ENCODE measurements at regions of chr1 and their contacts with region 1.

Region 1: GRCh38 chr1:62841587-62842169 is 57.7 kb downstream of the ATG4C start:
- DNase-seq: peak; percentile 53
- H3K4me3 ChIP-seq: no peak overlapping the region
- H3K27ac ChIP-seq: no peak overlapping the region
- H3K27me3 ChIP-seq: no peaks in the 10 kb centered on the region
- CTCF ChIP-seq: peak; percentile 67

Region 2: DNA sequence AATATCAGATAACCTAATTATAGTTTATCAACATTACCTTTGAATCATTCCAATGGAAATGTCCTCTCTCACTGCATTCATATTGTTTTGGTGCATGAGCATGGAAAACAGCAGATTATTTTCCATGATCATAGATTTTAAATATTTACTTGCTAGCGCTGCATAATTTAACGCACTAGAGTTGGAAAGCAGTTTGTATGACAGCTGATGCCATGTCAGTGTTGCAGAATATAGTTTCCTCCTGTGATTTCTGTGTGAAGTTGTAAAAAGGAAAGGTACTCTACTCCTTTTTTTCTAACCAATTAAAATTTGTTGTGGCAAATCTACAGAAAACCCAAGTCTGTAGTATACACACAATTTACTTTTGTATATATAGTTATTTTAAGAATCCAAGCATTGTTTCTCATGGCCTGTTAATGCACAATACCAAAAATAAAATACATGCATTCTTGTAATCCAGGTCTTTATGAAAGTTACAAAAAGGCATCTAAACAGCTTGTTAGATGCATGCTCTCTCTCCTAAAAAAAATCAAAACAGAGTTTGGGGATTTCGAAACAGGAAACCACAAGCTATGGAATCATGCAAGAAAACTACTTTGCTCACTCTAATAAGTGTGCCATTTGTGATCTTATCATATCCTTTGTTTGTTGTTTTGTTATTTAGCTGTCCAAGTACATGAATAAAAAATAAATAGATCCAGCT is 59.7 kb before region 1 on chr1:
- CTCF ChIA-PET with region 1: no interaction called
- POLR2A ChIA-PET with region 1: no interaction called
- DNase-seq: peak; percentile 3
- H3K4me3 ChIP-seq: no peak overlapping the region
- H3K27ac ChIP-seq: no peak overlapping the region
- H3K27me3 ChIP-seq: peaks cover 6% of the 10 kb centered on the region
- CTCF ChIP-seq: no peak

Region 3: GRCh38 chr1:62800825-62801306 is 40.8 kb before region 1 on chr1:
- CTCF ChIA-PET with region 1: interaction called, 10 read pairs
- POLR2A ChIA-PET with region 1: no interaction called
- DNase-seq: peak; percentile 55
- H3K4me3 ChIP-seq: no peak overlapping the region
- H3K27ac ChIP-seq: no peak overlapping the region
- H3K27me3 ChIP-seq: no peaks in the 10 kb centered on the region
- CTCF ChIP-seq: no peak

Region 4: GRCh38 chr1:62826901-62827300 is 14.8 kb before region 1 on chr1:
- CTCF ChIA-PET with region 1: interaction called, 34 read pairs
- POLR2A ChIA-PET with region 1: no interaction called
- DNase-seq: no peak
- H3K4me3 ChIP-seq: no peak overlapping the region
- H3K27ac ChIP-seq: no peak overlapping the region
- H3K27me3 ChIP-seq: no peaks in the 10 kb centered on the region
- CTCF ChIP-seq: no peak

Region 5: GRCh38 chr1:62856960-62857359 is 15.3 kb after region 1 on chr1:
- CTCF ChIA-PET with region 1: interaction called, 38 read pairs
- POLR2A ChIA-PET with region 1: interaction called, 3 read pairs
- DNase-seq: no peak
- H3K4me3 ChIP-seq: no peak overlapping the region
- H3K27ac ChIP-seq: no peak overlapping the region
- H3K27me3 ChIP-seq: no peaks in the 10 kb centered on the region
- CTCF ChIP-seq: no peak

Region 6: GRCh38 chr1:62906428-62906886 is 64.8 kb after region 1 on chr1:
- CTCF ChIA-PET with region 1: interaction called, 19 read pairs
- POLR2A ChIA-PET with region 1: no interaction called
- DNase-seq: no peak
- H3K4me3 ChIP-seq: no peak overlapping the region
- H3K27ac ChIP-seq: no peak overlapping the region
- H3K27me3 ChIP-seq: no peaks in the 10 kb centered on the region
- CTCF ChIP-seq: peak; percentile 55

Region 7: DNA sequence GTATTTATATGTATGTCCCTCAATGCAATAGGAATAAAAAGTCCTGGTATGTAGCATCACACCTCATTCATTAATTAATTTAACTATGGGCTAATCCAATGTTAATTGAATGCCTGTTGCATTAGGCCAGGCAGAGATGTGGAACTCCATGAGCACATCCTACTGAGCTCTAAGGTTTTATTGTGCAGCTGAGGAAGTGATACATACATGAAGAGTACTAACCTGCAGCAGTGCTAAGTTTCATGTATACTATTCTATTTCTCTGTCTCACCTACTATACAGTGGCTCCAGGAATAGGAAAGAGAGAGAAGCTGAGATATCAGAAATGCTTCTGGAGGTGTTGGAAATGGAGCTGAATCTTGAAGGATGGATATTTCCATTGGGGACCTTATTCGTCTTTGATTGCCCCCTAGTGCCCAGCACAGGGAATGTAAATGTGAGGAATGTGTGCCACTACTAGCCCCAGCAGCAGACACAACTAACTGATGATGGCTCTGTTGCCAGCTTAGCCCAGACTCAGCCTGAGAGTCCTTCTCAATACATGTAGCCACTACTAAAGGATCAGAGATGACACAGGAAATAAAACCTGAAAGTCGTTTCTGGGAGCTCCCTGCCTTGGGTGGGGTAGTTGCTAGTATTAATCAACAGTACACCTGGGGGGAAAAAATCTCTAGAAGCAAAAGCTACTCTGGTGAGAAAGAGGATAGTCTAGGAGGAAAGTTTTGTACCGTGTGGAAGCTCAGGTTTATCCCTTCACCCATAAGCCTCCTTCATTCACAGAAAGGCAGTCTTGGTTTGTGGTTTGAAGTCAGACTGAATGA is 307.4 kb after region 1 on chr1:
- CTCF ChIA-PET with region 1: interaction called, 52 read pairs
- POLR2A ChIA-PET with region 1: no interaction called
- DNase-seq: peak; percentile 3
- H3K4me3 ChIP-seq: no peak overlapping the region
- H3K27ac ChIP-seq: no peak overlapping the region
- H3K27me3 ChIP-seq: no peaks in the 10 kb centered on the region
- CTCF ChIP-seq: peak; percentile 67

Region 8: DNA sequence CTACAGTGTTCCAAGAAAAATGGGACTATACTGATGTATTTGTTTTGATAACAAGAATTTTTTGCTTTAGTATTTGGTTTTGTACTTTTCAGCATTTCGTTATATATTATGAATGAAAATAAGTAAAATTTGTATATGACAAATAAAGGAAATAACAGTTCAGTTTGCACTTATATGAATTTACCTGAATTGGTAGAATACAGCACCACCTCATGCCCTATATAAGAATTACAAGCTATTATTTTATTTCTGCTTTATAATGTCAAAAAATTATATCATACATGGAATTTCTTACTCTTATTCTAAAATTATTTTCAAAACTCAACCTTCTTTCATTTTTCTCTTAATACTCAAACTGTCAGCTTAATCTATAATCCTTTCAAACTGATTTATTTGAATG is 696.3 kb after region 1 on chr1:
- CTCF ChIA-PET with region 1: interaction called, 15 read pairs
- POLR2A ChIA-PET with region 1: no interaction called
- DNase-seq: no peak
- H3K4me3 ChIP-seq: no peak overlapping the region
- H3K27ac ChIP-seq: no peak overlapping the region
- H3K27me3 ChIP-seq: no peaks in the 10 kb centered on the region
- CTCF ChIP-seq: peak; percentile 47